Astrocyte of the cerebellum (primary cell): ENCODE measurements at regions of chr15 and their contacts with region 1.

Region 1: GRCh38 chr15:40274350-40275274 is 8.3 kb downstream of the ANKRD63 start:
- DNase-seq: peak; percentile 68
- H3K4me3 ChIP-seq: no peak overlapping the region
- CTCF ChIP-seq: peak; percentile 100

Region 2: GRCh38 chr15:39642011-39642640 is 632.5 kb before region 1 on chr15:
- in situ Hi-C with region 1: no loop called
- DNase-seq: peak; percentile 28
- H3K4me3 ChIP-seq: no peak overlapping the region
- CTCF ChIP-seq: no peak

Region 3: GRCh38 chr15:40016224-40016865 is 258.3 kb before region 1 on chr15:
- in situ Hi-C with region 1: loop called (anchors 5 kb)
- DNase-seq: no peak
- H3K4me3 ChIP-seq: no peak overlapping the region
- CTCF ChIP-seq: no peak

Region 4: DNA sequence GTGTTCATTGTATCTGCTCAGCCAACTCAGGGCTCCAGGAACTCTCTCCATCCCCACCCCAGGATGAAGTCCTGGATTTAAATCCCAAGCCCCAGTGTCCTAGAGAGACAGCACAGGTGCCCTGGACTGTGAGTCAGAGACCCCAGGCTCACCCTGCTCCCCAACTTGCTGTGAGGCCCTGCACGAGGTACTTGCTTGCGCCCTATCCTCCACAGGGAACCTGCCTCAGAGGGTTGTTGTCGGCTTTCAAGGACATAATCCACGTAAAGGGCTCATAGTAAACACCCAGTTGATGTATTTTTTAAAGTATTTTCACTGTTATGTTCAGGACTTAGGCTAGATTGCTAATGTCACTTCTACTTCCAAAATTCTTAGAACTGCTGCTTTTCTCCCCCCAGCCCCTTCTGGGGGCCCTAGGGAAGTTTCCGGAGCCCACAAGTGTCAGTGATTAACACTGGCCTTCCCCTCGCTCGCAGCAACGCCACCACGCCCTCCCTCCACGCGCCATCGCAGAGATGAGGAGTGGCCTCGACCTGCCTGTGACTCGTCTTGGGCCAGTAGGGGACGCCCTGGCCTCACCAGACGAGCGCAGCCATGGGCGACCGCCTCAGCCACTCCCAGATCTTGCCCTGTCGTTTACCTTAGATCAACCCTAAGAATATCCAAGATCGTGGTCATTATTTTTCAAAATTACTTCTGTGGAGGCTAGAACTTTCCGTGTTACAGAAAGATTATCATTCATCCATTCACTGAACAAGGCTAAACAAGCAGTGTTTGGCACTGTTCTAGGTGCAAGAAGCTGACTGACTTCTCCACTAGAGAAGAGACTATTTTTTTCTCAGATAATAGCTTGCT is 229.7 kb before region 1 on chr15:
- in situ Hi-C with region 1: loop called (anchors 5 kb)
- DNase-seq: no peak
- H3K4me3 ChIP-seq: peak overlapping the region; percentile 6
- CTCF ChIP-seq: peak; percentile 87

Region 5: DNA sequence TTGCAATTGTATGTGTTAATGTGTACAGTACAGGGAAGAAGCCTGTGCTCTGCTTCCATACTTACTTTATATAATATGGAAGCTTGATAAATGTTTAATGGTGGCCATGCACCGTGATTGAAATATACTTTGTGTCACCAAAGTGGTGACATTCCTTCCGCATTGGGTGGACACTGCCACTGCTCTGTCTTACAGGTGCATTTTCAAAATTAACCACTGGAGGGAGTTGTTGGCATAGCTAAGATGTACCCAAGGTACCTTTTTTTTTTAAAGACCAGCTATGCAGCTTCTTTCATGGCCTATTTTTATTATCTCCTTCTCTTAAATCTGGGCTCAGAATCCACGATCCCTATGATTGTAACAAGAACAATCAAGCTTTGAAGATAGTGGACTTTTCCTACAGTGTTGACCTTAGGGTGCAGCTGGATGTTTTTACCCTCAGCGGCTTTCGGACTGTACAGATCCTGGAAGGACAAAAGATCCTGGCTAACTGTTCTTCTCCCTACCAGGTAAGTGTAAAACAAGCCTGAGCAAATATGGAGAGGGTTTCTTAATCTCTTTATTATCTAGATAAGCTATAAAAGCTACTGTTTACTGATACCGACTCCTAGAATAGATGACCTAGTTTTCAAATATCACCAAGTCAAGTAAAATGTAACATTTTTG is 57.3 kb before region 1 on chr15:
- in situ Hi-C with region 1: loop called (anchors 5 kb)
- DNase-seq: peak; percentile 55
- H3K4me3 ChIP-seq: no peak overlapping the region
- CTCF ChIP-seq: peak; percentile 74

Region 6: GRCh38 chr15:40857601-40858341 is 583.2 kb after region 1 on chr15:
- in situ Hi-C with region 1: no loop called
- DNase-seq: peak; percentile 29
- H3K4me3 ChIP-seq: no peak overlapping the region
- CTCF ChIP-seq: peak; percentile 99